AG04449 (cell line): ENCODE measurements at regions of chr14 and their contacts with region 1.

Region 1: DNA sequence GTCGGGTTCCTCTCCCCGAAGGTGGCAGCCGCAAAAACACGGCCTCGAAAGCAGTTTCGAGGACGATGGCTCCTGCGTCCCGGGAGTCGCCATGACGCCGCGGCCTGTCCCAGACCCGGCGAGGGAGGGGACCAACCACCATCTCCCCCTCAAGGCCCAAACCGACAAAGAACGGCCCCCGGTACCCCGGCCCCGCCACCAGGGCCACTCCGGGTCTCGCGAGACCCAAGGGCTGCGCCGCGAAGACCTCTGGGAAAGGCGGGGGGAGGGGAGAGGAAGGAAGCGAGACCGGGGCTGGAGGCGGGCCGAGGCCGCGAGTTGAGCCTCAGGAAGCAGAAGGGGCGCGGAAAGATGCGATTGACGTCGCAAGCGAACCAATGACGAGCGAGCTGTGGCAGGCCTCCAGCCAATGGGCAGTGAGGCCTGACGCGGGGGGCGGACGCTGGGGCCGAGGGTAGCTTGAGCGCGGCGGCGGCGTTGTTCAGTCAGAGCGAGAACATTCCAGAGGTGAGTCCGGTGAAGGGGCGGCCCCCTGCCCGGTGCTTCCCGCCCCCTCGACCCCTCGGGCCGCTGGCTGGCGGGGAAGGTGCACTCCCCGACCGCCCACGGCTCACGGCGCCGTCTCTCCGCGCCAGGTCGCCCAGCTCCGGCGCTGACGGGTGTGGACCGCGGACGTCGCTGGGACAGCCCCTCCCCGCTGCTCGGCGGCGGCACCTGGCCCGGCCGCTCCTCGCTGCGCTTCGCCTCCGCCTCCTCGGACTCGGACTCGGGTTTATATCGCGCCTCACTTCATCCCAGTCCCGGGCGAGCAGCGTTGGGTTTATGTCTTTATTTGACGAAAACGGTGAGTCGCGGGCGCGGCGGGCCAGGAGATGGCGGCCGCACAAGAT is at the start of gene EIF5:
- DNase-seq: peak; percentile 89
- H3K4me3 ChIP-seq: peak within 1 kb of the TSS; percentile 88
- CTCF ChIP-seq: peak; percentile 12

Region 2: DNA sequence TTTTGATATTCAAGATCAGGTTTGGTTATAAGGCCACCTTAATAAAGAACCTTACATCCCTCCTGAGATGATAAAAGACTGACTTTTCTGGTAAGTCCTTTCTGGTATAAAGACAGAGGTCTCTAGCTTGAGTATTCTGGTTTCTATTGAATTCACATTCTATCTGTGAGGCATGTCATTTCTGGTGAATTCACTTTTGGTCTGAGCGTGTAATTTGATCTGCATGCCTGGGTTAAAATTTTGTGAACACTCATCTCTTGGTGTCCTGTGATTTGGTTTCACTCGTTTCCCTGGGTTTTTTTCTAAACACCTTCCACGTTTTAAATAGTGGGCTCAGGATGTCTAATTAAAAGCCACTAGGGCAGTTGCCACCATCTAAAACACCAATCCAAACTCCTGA is 12.3 kb after region 1 on chr14:
- CTCF ChIA-PET with region 1: interaction called, 4 read pairs
- POLR2A ChIA-PET with region 1: interaction called, 11 read pairs
- DNase-seq: no peak
- H3K4me3 ChIP-seq: no peak overlapping the region
- CTCF ChIP-seq: no peak